Activated T-helper 2 cell treated with anti-CD3 and anti-CD28 coated beads, Interferon-gamma antibody, Interleukin-2, Interleukin-4, amounts not matched to agents 10 μg/mL and 5 μg/mL and 100 μg/mL, durations not matched to agents 14 hours and 24 hours and 36 hours (primary cell): ENCODE measurements at regions of chr1 and their contacts with region 1.

Region 1: GRCh38 chr1:37692078-37692833 is at the start of gene CDCA8:
- DNase-seq: peak; percentile 99
- H3K4me3 Mint-ChIP-seq: peak within 1 kb of the TSS; percentile 94
- H3K27ac Mint-ChIP-seq: peak within 1 kb of the TSS; percentile 87
- H3K4me1 Mint-ChIP-seq: peaks cover 37% of the 10 kb centered on the region
- H3K27me3 Mint-ChIP-seq: no peaks in the 10 kb centered on the region
- total RNA-seq, gene CDCA8: 41.2 TPM in 2 replicates

Region 2: GRCh38 chr1:37458528-37458927 is 233.7 kb before region 1 on chr1:
- intact Hi-C with region 1: loop called (anchors 5 kb)
- DNase-seq: no peak
- H3K4me3 Mint-ChIP-seq: no peak overlapping the region
- H3K27ac Mint-ChIP-seq: no peak overlapping the region
- H3K4me1 Mint-ChIP-seq: peaks cover 6% of the 10 kb centered on the region
- H3K27me3 Mint-ChIP-seq: no peaks in the 10 kb centered on the region

Region 3: GRCh38 chr1:37553927-37554808 is 138.1 kb before region 1 on chr1 and contains the start of gene SNIP1:
- intact Hi-C with region 1: loop called (anchors 2 kb)
- DNase-seq: peak; percentile 89
- H3K4me3 Mint-ChIP-seq: peak within 1 kb of the TSS; percentile 98
- H3K27ac Mint-ChIP-seq: peak within 1 kb of the TSS; percentile 93
- H3K4me1 Mint-ChIP-seq: peaks cover 41% of the 10 kb centered on the region
- H3K27me3 Mint-ChIP-seq: no peaks in the 10 kb centered on the region
- total RNA-seq, gene SNIP1: 26.1 and 27.8 TPM in 2 replicates

Region 4: GRCh38 chr1:37667023-37667761 is 25.1 kb before region 1 on chr1:
- intact Hi-C with region 1: no loop called
- DNase-seq: no peak
- H3K4me3 Mint-ChIP-seq: no peak overlapping the region
- H3K27ac Mint-ChIP-seq: no peak overlapping the region
- H3K4me1 Mint-ChIP-seq: no peaks in the 10 kb centered on the region
- H3K27me3 Mint-ChIP-seq: peaks cover 8% of the 10 kb centered on the region

Region 5: GRCh38 chr1:37807555-37808368 is 115.5 kb after region 1 on chr1 and contains the starts of genes C1orf122 and YRDC:
- intact Hi-C with region 1: loop called (anchors 1 kb)
- DNase-seq: peak; percentile 89
- H3K4me3 Mint-ChIP-seq: peak within 1 kb of the TSS; percentile 94
- H3K27ac Mint-ChIP-seq: peak within 1 kb of the TSS; percentile 94
- H3K4me1 Mint-ChIP-seq: peaks cover 30% of the 10 kb centered on the region
- H3K27me3 Mint-ChIP-seq: no peaks in the 10 kb centered on the region
- total RNA-seq, gene C1orf122: 22.6 and 24.5 TPM in 2 replicates
- total RNA-seq, gene YRDC: 45.2 and 46.5 TPM in 2 replicates

Region 6: GRCh38 chr1:37995751-37996345 is 303.6 kb after region 1 on chr1:
- intact Hi-C with region 1: loop called (anchors 5 kb)
- DNase-seq: no peak
- H3K4me3 Mint-ChIP-seq: peak overlapping the region; percentile 54
- H3K27ac Mint-ChIP-seq: peak overlapping the region; percentile 75
- H3K4me1 Mint-ChIP-seq: peaks cover 45% of the 10 kb centered on the region
- H3K27me3 Mint-ChIP-seq: no peaks in the 10 kb centered on the region